ENCODE measurements at regions of chr1 and their contacts with region 1.

Region 1: DNA sequence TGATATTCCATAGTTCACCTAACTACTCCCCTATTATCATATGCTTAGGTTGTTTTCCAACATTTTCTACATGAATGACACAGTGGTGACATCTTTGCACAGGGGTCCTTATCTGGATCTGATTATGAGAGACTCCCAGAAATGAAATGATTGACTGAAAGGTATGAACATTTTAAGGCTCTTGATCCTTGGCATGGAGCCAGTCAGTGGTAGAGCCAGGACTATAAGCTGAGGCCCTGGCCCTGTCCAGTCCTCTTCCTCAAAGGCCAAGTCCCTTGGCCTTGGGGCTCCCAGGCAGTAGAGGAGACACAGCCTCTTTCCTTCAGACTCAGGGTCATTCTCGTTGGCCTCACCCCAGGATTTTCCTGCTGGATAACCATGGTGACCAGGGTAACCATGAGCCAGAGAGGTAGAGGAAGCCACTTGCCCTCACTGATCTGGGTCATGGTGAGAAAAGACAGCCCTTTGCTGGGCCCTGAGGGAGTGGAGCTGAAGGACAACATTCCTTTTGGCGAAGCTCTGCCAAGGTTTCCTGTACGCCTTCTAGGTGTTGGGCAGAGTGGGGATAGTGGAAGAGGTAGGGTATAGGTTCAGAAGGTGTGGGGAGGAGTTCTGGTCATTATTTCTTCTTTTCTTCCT is 53.0 kb upstream of the WNT4 start:
- DNase-seq: no peak
- ATAC-seq: no peak
- H3K4me3 ChIP-seq: no peak overlapping the region
- H3K27ac ChIP-seq: no peak overlapping the region
- H3K4me1 ChIP-seq: no peaks in the 10 kb centered on the region
- H3K27me3 ChIP-seq: peaks cover 25% of the 10 kb centered on the region
- CTCF ChIP-seq: no peak
- POLR2A ChIP-seq: no peak
- RAD21 ChIP-seq: no peak

Region 2: DNA sequence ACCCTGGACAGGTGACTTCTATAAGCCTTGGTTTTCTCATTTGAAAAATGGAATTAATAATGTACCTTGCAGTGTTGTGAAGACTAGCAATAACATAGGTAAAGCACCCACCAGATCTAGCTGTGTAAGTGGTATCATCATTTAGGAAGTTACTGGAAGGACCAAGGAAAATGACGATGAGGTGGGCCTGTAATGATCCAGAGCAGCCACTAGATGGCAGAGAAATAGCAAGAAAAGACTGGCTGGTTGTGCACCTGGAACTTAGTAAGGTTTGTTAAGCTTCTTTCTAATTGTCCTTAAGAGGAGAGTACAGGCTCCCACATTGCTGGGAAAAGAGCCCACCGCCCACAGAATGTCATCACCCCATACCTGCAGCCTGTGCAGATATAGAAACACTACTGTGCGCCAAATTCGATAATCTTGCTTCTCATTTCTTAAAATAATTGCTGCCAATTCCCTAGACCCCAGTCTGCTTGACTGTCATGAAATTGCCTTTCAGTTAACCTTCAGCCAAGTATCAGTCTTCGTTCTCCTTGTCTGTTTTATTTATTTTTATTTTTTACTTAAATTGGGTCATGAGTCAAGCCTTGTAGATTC is 90.2 kb before region 1 on chr1:
- CTCF ChIA-PET with region 1: no interaction called
- POLR2A ChIA-PET with region 1: no interaction called
- dilution Hi-C with region 1: no loop called
- in situ Hi-C with region 1: no loop called
- intact Hi-C with region 1: no loop called
- DNase-seq: peak; percentile 69
- ATAC-seq: peak; percentile 77
- H3K4me3 ChIP-seq: no peak overlapping the region
- H3K27ac ChIP-seq: no peak overlapping the region
- H3K4me1 ChIP-seq: peaks cover 9% of the 10 kb centered on the region
- H3K27me3 ChIP-seq: no peaks in the 10 kb centered on the region
- CTCF ChIP-seq: peak; percentile 76
- POLR2A ChIP-seq: no peak
- RAD21 ChIP-seq: peak; percentile 74

Region 3: GRCh38 chr1:22309572-22309971 is 113.7 kb after region 1 on chr1:
- CTCF ChIA-PET with region 1: no interaction called
- POLR2A ChIA-PET with region 1: interaction called, 10 read pairs
- dilution Hi-C with region 1: no loop called
- in situ Hi-C with region 1: no loop called
- intact Hi-C with region 1: no loop called
- DNase-seq: no peak
- ATAC-seq: no peak
- H3K4me3 ChIP-seq: no peak overlapping the region
- H3K27ac ChIP-seq: no peak overlapping the region
- H3K4me1 ChIP-seq: no peaks in the 10 kb centered on the region
- H3K27me3 ChIP-seq: peaks cover 14% of the 10 kb centered on the region
- CTCF ChIP-seq: no peak
- POLR2A ChIP-seq: no peak
- RAD21 ChIP-seq: no peak